IMR-90 (cell line): ENCODE measurements at regions of chr10 and their contacts with region 1.

Region 1: DNA sequence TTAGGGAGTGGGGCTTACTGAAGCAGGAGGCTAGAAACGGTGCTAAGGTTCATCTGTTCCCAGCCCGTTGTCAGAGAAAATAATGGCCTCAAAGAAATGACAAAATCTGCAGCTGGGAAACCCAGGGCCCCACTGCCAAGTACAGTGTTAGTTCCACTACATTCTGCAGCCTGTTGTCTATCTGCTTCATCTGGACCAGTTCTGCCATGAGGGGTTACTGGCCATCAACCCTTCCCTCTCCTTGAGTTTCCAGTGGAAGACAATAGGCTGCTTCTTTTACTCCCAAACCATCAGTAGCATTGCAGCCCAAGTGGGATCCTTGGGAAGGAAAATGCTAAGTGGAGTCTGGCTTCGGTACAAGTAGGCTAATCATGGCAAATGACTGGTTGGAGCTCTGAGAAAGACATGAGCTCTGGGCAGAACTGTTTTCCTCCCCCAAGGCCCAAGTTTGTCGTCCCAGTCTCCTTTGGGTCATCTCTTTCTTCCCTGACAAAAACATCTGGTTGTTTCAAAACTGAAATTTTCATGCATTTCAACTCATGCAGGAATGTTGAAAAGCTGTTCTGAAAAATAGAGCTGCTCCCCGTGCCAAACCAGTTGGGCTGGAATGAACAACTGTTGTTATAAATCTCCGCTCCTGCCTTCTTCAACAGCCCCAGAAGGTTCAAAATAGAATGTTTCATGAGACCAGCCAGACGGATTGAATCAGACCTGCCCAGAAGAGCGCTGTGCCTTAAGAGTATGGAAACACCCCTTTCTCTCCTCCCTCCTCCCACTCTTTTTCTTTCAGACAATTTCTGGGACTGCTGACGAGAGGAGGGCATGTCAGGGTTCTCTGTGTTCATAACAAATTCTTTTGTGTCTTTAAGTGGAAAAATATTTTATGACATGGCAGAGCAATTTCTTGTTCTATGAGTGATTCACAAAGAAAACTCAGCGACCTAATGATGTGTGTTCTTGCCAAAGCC is 116.6 kb downstream of the RAB18 start:
- DNase-seq: peak; percentile 58
- ATAC-seq: peak; percentile 86
- H3K4me3 ChIP-seq: peak overlapping the region; percentile 9; the same call in 1 of the 2 replicates
- H3K27ac ChIP-seq: peak overlapping the region; percentile 73; the same call in 1 of the 2 replicates
- H3K4me1 ChIP-seq: peaks cover 12% of the 10 kb centered on the region
- H3K27me3 ChIP-seq: peaks cover 7% of the 10 kb centered on the region
- CTCF ChIP-seq: no peak
- POLR2A ChIP-seq: no peak
- RAD21 ChIP-seq: no peak

Region 2: DNA sequence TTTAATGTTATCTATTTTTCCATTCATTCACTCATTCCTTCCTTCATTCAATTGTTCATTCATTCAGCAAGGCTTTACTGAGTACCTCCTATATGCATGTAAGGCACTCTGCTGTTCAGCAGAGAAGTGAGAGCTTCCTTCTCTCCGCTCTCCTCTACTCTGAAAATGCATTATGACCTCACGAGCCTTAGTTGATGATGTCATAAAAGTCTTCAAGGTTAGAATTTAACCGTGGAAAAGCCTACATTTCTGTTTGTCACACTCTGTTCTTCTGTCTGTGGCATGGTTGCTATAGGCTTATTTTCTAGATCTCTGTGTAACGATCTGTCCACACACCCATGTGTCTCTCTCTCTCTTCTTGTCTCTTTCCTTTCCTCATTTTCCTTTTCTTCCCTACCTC is 361.0 kb after region 1 on chr10:
- CTCF ChIA-PET with region 1: interaction called, 11 read pairs
- POLR2A ChIA-PET with region 1: no interaction called
- dilution Hi-C with region 1: no loop called
- in situ Hi-C with region 1: no loop called
- intact Hi-C with region 1: no loop called
- DNase-seq: no peak
- ATAC-seq: no peak
- H3K4me3 ChIP-seq: no peak overlapping the region
- H3K27ac ChIP-seq: no peak overlapping the region
- H3K4me1 ChIP-seq: no peaks in the 10 kb centered on the region
- H3K27me3 ChIP-seq: no peaks in the 10 kb centered on the region
- CTCF ChIP-seq: no peak
- POLR2A ChIP-seq: no peak
- RAD21 ChIP-seq: no peak

Region 3: DNA sequence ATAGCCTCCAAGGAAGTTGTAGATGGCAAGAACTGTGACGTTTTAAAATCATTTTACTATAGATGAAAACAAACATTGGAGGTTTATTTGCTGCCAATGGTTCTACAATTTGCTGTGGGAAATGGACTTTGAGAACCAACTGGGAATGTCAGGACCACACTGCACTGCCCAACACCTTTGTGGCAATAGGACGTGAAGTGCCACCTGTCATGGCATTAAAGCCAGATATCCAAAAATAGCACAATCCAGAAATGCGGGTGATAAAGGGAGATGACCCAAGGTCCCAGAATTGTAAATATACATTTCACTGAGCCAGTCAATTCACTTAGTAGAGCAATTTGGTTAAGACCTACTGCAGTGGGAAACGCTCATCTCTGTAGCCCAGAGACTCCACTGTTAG is 565.7 kb after region 1 on chr10:
- CTCF ChIA-PET with region 1: no interaction called
- POLR2A ChIA-PET with region 1: no interaction called
- dilution Hi-C with region 1: no loop called
- in situ Hi-C with region 1: no loop called
- intact Hi-C with region 1: no loop called
- DNase-seq: no peak
- ATAC-seq: no peak
- H3K4me3 ChIP-seq: no peak overlapping the region
- H3K27ac ChIP-seq: no peak overlapping the region
- H3K4me1 ChIP-seq: peaks cover 2% of the 10 kb centered on the region; the same call in 1 of the 2 replicates
- H3K27me3 ChIP-seq: no peaks in the 10 kb centered on the region
- CTCF ChIP-seq: no peak
- POLR2A ChIP-seq: no peak
- RAD21 ChIP-seq: no peak